PC-3 (cell line): ENCODE measurements at regions of chr19 and their contacts with region 1.

Region 1: GRCh38 chr19:12365236-12366162 is at the start of gene ZNF442:
- DNase-seq: peak; percentile 96
- ATAC-seq: peak; percentile 97
- H3K4me3 ChIP-seq: peak within 1 kb of the TSS; percentile 82
- H3K27ac ChIP-seq: no peak within 1 kb of the TSS
- H3K4me1 ChIP-seq: no peaks in the 10 kb centered on the region; the same call in 1 of the 2 replicates
- H3K27me3 ChIP-seq: no peaks in the 10 kb centered on the region
- CTCF ChIP-seq: peak; percentile 64
- total RNA-seq, gene ZNF442: 0.63 and 1.1 TPM in 2 replicates

Region 2: GRCh38 chr19:12064590-12065538 is 300.6 kb before region 1 on chr19 and contains the start of gene ZNF844:
- CTCF ChIA-PET with region 1: interaction called, 14 read pairs
- POLR2A ChIA-PET with region 1: no interaction called
- intact Hi-C with region 1: no loop called
- DNase-seq: peak; percentile 89
- ATAC-seq: peak; percentile 95
- H3K4me3 ChIP-seq: peak within 1 kb of the TSS; percentile 90
- H3K27ac ChIP-seq: peak within 1 kb of the TSS; percentile 10
- H3K4me1 ChIP-seq: no peaks in the 10 kb centered on the region
- H3K27me3 ChIP-seq: no peaks in the 10 kb centered on the region
- CTCF ChIP-seq: no peak
- total RNA-seq, gene ZNF844: 4.0 and 4.7 TPM in 2 replicates

Region 3: GRCh38 chr19:12217332-12217731 is 148.2 kb before region 1 on chr19:
- CTCF ChIA-PET with region 1: no interaction called
- POLR2A ChIA-PET with region 1: interaction called, 11 read pairs
- intact Hi-C with region 1: no loop called
- DNase-seq: no peak
- ATAC-seq: no peak
- H3K4me3 ChIP-seq: no peak overlapping the region
- H3K27ac ChIP-seq: no peak overlapping the region
- H3K4me1 ChIP-seq: no peaks in the 10 kb centered on the region
- H3K27me3 ChIP-seq: no peaks in the 10 kb centered on the region
- CTCF ChIP-seq: no peak